G401 (cell line): ENCODE measurements at regions of chr12 and their contacts with region 1.

Region 1: DNA sequence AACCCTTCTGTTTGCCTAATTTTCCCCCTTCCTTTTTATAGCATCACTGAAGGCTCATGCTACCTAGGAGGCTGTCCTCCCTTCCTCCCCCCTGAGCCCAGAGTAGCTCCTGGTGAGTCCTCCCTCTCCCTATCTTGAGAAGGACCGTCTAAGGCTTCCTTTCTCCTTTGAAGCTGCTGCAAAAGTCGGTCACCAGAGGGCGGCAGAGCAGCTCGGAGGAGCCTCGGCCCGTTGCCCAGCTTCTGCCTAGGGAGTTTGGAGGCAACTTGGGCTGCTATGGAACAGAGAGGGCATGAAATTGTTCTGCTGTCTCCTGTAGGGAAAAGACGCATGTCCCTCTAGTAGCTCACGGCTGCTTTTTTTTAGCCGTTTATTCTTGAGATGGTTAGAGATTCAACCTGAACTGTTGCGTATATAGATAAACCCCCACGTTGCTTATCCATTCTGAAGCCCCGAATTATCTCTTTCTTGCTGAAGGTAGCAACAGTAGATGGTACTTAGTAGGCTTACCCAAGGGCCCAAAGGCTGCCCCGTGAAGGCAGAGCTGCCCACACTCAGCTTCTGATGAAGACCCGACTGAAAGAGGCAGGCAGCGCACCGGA is 5.7 kb downstream of the WNT5B start:
- DNase-seq: peak; percentile 87

Region 2: DNA sequence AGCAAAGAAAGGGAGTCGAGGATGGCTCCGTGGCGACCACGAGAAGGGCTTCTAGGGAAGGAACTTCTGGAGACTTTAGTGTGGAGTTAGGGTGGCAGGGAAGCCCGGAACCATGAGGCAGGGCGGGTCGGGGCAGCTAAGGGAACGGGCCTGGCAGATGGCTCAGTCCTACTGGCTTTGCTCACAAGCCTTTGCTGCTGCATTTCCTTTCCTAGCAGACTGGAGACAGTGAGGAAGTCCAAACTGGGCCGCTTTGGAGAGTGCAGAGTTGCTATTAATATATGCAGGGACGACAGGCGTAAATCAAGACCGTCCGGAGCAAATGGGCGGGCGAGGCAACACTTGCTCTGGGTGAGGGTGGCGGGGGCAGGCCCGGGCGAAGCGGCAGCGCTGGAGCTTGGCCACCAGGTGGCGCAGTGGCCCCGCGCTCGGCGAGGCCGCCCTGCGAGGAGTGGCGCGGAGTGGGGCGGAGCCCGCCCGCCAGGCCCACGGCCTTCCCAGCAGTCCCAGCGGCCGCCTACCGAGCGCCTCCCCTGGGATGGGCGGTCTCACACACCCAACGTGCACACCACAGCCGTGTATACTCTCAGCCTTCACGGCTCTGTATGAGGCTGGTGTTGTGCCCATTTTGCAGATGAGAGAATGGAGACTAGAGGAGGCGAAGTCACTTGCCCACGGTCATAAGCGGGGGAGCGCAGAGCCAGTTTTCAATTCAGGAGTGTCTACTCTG is 161.3 kb after region 1 on chr12:
- in situ Hi-C with region 1: loop called (anchors 25 kb)
- DNase-seq: peak; percentile 67